Right cardiac atrium (tissue), 5 donors: ENCODE measurements at regions of chr12 and their contacts with region 1.

Region 1: DNA sequence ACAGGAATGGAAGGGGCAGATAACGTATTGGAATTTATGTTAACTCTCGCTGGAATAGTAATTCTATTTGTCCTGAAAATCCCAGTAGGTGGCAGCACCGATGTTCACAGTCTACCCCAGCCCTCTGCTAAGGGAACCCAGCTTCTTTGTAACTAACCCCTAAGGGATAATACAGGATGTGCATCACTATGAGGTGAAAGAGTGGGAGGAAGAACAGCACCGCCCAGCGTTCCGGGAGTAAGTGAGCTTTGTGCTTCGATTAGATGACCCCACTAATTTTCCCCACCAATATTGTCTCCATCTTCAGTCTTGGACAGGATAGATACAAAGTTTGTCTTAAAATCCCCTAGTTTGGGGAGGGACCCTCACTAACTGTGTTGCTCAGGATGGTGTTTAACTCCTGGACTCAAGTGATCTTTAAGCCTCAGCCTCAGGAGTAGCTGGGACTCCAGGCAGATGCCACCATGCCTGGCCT is 2.7 kb downstream of the SLC2A3 start:
- DNase-seq: peak; percentile 72 to 87 (median 85)
- ATAC-seq: peak; percentile 95 to 96
- H3K4me3 ChIP-seq: peak overlapping the region; percentile 88
- H3K27ac ChIP-seq: peak overlapping the region; percentile 63
- H3K4me1 ChIP-seq: no peaks in the 10 kb centered on the region
- H3K27me3 ChIP-seq: no peaks in the 10 kb centered on the region

Region 2: DNA sequence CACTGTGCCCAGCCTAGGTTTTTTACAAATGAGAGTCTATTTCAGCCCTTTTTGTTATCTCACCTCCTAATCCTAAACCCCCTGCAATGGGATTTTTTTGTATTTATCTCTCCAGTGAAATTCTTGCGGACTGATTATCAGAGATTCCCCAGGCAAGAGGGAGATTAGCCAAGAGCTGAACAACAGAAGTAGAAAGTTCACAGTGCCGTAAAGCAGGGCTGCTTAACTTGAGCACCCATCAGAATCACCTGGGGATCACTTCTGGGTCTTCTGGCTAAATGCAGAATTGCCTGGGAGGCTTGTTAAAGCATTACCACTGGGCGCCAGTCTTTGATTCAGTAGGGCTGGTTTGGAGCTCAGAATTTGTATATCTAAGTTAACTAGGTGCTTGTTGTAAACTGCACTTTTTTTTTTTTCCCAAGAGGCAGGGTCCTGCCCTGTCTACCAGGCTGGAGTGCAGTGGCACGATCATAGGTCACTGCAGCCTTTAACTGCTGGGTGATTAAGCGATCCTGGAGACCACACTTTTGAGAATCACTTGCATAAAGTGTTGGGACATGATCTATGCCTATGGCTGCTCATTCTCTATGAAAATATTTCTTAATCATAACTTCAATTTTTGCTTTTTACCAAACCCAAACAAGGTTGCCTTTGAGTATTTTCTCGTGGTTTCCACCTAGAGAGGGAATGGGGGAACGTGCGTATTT is 223.2 kb before region 1 on chr12:
- intact Hi-C with region 1: no loop called
- DNase-seq: no peak
- ATAC-seq: no peak
- H3K4me3 ChIP-seq: no peak overlapping the region
- H3K27ac ChIP-seq: no peak overlapping the region
- H3K4me1 ChIP-seq: no peaks in the 10 kb centered on the region
- H3K27me3 ChIP-seq: no peaks in the 10 kb centered on the region

Region 3: DNA sequence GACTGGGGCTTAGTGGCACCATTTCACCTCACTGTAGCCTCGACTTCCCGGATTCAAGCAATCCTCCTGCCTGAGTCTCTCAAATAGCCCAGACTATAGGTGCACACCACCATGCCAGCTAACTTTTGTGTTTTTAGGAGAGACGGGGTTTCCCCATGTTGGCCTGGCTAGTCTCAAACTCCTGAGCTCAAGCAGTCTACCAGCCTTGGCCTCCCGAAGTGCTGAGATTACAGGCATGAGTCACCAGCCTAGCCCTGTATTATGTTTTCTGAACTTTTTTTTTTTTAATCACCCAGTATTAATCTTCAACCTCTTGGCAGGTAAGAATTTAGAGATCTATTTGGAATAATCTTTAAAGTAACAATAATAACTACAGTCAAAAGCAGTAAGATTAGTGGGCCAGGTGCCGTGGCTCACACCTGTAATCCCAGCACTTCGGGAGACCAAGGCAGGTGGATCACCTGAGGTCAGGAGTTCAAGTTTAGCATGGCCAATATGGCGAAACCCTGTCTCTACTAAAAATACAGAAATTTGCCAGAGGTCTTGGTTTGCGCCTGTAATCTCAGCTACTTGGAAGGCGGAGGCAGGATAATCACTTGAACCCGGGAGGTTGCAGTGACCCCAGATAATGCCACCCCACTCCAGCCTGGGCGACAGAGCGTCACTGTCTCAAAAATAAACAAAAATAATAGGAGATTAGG is 135.4 kb before region 1 on chr12:
- intact Hi-C with region 1: no loop called
- DNase-seq: no peak
- ATAC-seq: no peak
- H3K4me3 ChIP-seq: no peak overlapping the region
- H3K27ac ChIP-seq: no peak overlapping the region
- H3K4me1 ChIP-seq: no peaks in the 10 kb centered on the region
- H3K27me3 ChIP-seq: no peaks in the 10 kb centered on the region

Region 4: DNA sequence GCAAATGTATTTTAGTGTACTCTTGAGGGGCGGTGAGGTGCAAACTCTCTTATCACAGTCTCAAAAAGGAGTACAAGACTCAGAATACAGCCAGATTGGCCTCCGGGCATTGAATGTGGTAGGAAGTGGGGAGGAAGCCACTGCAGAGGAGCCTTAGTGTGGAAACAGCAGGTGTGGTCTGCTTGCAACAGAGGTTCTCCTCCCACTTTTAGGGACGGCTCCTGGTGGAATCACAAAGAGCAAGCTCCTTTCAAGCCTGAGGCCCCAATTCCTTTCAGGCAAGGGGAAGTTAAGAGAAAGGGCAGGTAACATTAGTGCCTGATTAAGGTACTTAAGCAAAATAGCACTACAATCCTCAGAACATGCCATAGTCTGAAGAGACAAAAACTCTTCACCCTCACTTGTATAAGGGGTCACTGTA is 26.4 kb after region 1 on chr12:
- intact Hi-C with region 1: loop called in 1 of 4 experiments (anchors 2 kb)
- DNase-seq: no peak
- ATAC-seq: peak in 1 of 2 donors; percentile 43
- H3K4me3 ChIP-seq: no peak overlapping the region
- H3K27ac ChIP-seq: no peak overlapping the region
- H3K4me1 ChIP-seq: no peaks in the 10 kb centered on the region
- H3K27me3 ChIP-seq: no peaks in the 10 kb centered on the region

Region 5: DNA sequence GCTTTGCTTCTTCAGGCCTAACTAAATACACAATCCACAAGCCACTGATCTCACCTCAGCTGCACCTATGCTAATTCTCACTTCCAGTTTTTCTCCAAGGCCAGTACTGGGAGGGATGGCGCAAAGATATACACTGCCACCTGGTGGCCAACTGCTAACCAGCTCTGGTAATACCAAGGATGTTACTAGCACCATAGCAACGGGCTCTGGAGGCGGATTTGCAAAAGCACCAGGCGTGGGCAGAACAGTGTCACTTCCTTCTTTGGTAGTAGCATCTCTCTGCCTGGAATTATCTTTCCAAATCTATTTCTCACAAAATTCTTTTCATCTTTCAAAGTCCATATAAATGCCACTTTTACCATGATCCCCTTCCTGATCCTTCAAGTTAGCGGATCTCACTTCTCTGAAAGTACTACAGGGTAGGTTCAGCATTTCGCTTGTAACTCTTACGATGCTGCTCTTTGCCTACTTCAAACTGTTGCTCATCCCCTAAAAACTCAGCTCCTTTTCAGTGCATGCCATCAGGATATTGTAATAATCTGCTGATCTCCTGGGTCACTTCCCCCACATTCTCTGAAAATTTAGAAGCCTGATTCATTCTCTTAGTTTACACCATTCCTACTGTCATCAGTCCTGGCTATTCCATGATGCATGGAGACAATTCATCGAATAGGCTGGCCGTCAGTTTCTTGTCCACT is 62.1 kb after region 1 on chr12:
- intact Hi-C with region 1: loop called (anchors 2 to 10 kb)
- DNase-seq: peak; percentile 80 to 87 (median 85)
- ATAC-seq: peak; percentile 99
- H3K4me3 ChIP-seq: no peak overlapping the region
- H3K27ac ChIP-seq: no peak overlapping the region
- H3K4me1 ChIP-seq: no peaks in the 10 kb centered on the region
- H3K27me3 ChIP-seq: no peaks in the 10 kb centered on the region